ENCODE measurements at regions of chr19 and their contacts with region 1.

Region 1: DNA sequence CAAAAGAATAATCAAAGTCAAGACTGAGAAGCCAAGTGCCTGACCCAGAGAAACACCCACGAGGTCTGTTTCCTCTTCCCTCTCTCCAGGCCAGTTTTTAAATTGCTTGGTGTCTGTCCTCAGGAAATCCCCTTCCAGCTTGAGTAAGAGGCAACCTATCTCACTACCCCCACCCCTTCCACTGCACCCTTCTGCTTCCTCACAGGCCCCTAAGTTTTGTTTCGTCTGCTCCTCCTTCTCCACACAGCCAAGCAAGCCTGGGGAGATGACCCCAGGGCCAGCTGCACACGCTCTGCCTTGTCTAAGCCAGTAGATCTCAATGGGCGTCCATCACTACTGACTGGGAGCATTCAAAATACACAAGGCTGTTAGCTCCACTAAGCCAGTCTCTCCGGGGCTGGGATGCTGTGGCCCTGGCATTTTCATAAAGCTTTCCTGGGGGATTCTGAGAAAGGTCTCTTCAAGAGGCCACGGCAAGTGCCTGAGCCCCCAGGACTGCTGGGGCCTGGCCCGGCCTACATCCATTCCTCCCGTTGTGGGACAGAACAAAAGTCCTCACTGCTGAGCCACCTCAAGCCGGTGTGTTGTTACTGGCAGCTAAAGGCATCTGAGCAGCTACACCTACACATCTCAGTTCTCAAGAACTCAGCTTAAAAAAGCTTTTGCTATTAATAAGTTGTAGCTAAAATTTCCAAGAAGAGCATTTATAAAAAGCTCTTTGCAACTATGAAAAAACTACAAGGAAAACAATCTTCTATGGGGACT is 14.9 kb upstream of the IL4I1 start:
- DNase-seq: no peak
- H3K4me3 ChIP-seq: no peak overlapping the region
- H3K27ac ChIP-seq: no peak overlapping the region
- H3K4me1 ChIP-seq: peaks cover 0 to 6% (median 3%) of the 10 kb centered on the region in 4 experiments; a peak in 3 of 7 replicates
- H3K27me3 ChIP-seq: no peaks in the 10 kb centered on the region; a peak in 1 of 7 replicates
- CTCF ChIP-seq: no peak
- EP300 ChIP-seq: no peak
- POLR2A ChIP-seq: peak in 1 of 2 experiments; percentile 68; a peak in 1 of 3 replicates
- RAD21 ChIP-seq: no peak

Region 2: DNA sequence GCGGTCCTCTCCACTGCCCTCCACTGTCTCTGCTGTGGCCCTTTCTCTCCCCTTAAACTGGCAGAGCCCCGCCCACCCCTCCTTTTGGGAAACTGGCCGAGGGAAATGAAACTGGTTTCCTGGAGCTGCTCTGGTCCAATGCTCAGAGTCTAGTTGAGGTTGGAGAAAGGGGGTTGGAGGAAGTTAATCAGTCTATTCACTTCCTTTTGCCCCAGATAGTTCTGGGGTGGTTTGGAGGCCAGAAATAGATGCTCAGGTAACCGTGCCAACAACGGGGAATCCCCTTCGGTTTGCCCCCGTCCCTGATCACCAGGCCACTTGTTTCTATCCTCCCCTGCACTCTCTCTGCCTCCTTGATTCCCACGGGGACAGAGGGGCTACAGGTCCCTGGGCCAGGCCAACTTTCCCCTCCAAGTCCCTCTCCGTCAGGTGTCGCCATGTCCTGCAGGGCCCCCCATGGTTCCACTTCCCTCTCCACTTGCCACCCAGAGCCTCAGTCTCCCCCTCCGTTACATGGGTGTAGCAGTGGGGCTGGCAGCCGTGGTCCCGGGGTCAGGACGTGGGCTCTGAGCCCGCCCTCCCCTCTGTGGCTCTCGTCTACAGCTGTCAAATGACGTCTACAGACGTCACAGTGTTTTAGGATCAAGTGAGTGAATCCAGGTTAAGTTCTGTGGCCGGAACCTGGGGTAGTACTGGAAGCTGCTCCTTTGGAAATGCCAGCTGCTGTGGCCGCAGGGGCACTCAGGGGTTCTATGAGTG is 14.5 kb before region 1 on chr19 and contains the start of gene IL4I1:
- CTCF ChIA-PET with region 1: interaction called, 15 read pairs
- POLR2A ChIA-PET with region 1: interaction called, 11 read pairs
- DNase-seq: no peak
- H3K4me3 ChIP-seq: no peak within 1 kb of the TSS
- H3K27ac ChIP-seq: no peak within 1 kb of the TSS
- H3K4me1 ChIP-seq: 0 out of 7 replicates have a peak, but pooled peaks cover 0 to 7% (median 0%) of the 10 kb centered on the region in 4 experiments
- H3K27me3 ChIP-seq: 0 out of 7 replicates have a peak, but pooled peaks cover 0 to 3% (median 0%) of the 10 kb centered on the region in 4 experiments
- CTCF ChIP-seq: no peak
- EP300 ChIP-seq: no peak
- POLR2A ChIP-seq: no peak
- RAD21 ChIP-seq: no peak
- total RNA-seq, gene IL4I1: 0.67 and 0.76 TPM in 2 replicates